Left cardiac atrium (tissue), 4 donors: ENCODE measurements at regions of chr13 and their contacts with region 1.

Region 1: DNA sequence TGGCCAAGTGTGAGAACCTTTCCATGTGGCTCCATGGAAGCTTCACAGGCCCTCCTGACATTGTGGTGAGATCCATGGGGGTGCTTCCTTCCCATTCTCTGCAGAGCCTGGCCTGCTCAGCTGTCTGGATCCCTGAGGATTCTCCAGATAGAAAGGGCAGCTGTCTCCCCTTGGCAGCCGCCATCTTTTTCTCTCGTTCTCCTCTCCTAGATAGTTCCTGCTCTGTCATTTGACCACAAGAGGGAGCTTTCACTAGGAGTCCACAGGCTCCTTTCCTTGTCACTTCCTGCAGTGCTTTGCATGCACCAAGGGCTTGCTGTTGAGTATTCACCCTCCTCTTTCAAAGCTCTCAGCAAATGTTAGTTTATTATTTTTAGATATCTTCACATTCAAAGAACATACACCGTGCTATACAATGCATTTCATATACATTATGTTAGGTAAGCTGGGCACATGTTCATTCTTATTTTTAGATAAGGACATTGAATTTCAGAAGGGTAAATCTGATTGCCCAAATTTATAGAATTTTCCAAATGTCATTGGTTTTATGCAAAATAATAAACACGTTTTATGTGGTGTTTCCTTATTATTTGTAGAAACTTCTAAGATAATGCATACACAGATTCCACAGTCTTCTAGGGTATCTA is 133.2 kb downstream of the FRY start:
- DNase-seq: no peak
- ATAC-seq: peak; percentile 68 to 71

Region 2: DNA sequence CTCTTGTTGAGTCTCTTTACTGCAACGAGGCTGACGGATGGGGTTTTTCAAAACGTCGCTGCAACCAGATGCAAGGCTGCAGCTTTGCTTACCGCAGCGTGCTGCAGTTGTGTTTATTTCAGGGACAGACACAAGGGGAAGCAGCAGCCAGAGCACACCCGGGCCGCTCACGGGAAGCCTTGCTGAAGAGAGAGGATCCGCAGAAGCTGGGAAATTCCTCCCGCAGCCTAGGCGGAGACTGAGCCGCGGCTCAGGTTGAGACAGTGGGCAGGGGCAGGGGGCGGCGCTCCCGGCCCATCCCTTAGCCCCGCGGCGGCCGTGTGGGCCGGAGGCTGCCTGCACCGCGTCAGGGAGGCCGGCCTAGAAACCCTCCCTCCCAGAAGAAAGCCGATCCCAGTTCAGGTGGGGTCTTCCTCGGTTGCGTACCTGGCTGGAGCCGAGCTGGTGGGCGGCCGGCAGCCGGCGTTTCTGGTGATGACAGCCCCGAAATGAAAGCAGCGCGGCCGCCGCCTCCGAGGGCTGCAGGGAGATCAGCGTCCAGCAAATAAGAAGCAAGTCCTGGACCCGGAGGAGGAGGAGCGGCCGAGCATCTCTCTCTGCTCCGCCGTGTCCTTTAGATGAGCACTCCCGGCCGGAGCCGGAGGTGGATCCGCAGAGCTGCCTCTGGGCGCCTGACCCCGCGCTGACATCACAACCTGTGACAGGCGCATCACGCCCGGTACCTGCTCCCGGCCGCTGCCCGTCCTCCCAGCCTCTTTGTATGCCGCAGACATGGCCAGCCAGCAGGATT is 133.5 kb before region 1 on chr13 and contains the start of gene FRY:
- intact Hi-C with region 1: loop called in 1 of 2 experiments (anchors 10 kb)
- DNase-seq: peak; percentile 75
- ATAC-seq: peak; percentile 83 to 96
- total RNA-seq, gene FRY: 91.1 to 93.5 TPM